ENCODE measurements at regions of chr17 and their contacts with region 1.

Region 1: DNA sequence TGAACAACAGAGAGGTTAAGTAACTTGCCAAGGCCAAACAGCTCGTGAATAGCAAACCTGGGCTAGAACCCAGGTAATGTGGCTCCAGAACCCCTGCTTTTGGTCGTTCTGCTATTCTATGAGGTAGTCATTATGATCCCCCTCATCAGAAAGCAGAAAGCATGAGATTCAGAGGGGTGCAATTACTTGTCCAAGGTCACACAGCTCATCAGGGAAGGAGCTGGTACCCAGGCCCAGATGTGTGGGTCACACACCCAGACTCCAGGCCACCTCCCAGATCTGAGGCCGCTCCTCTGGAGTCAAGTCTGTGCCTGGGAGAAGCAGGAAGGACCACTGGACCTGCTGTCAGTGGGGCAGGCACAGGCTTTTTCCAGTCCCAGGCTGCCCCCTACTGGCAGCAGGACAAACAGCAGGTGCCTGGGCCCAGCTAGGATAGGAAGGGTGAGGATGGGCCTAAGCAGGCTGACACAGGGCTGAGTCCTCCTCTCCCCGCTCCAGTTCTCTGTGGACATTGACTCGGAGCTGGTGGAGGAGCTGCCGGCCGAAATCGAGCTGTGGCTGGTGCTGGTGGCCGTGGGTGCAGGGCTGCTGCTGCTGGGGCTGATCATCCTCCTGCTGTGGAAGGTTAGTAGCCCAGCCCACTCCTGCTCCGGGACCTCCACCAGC is 7.8 kb upstream of the PDK2 start:
- DNase-seq: peak; percentile 48
- H3K4me3 ChIP-seq: no peak overlapping the region
- H3K27ac ChIP-seq: no peak overlapping the region
- H3K27me3 ChIP-seq: no peaks in the 10 kb centered on the region
- CTCF ChIP-seq: peak; percentile 95

Region 2: DNA sequence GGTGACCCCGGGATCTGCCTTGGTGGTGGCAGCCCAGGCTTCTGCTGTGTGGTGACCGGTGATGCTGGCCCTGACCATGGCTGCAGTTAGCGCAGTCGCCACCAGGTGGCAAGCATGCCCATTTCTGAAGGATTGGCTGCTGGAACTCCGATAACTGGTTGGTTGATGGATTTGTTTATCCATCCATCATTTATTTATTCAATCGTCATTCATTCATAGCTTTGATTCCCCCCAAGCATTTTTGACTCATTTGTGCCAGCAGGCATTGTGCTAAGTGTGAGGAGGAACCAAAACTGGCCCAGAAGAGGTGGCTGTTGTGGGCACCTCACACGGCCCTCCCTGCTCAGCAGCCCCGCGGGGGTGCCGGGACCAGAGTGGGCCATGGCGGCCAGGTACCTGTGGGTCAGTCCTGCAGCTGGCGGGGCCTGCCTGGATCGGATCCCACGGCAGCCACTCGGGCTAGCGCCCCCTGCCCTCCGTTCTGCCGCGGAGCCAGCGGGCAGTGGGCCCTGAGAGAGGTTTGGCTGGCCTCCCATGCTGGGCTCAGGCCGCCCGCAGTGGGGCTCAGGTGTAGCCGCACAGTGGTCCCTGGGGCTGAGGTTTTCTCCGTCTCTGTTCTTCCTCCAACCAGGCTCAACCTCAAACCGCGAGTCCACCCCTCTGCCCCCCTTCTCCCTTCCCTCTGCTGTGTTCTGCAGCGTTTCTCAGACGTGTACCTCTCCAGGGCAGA is 60.3 kb before region 1 on chr17:
- CTCF ChIA-PET with region 1: interaction called, 85 read pairs
- POLR2A ChIA-PET with region 1: no interaction called
- DNase-seq: no peak
- H3K4me3 ChIP-seq: peak overlapping the region; percentile 51
- H3K27ac ChIP-seq: peak overlapping the region; percentile 91
- H3K27me3 ChIP-seq: no peaks in the 10 kb centered on the region
- CTCF ChIP-seq: peak; percentile 90

Region 3: GRCh38 chr17:50037321-50038071 is 49.9 kb before region 1 on chr17:
- CTCF ChIA-PET with region 1: interaction called, 15 read pairs
- POLR2A ChIA-PET with region 1: no interaction called
- DNase-seq: no peak
- H3K4me3 ChIP-seq: no peak overlapping the region
- H3K27ac ChIP-seq: no peak overlapping the region
- H3K27me3 ChIP-seq: no peaks in the 10 kb centered on the region
- CTCF ChIP-seq: no peak

Region 4: GRCh38 chr17:50064258-50065001 is 22.9 kb before region 1 on chr17:
- CTCF ChIA-PET with region 1: interaction called, 15 read pairs
- POLR2A ChIA-PET with region 1: no interaction called
- DNase-seq: peak; percentile 85
- H3K4me3 ChIP-seq: no peak overlapping the region
- H3K27ac ChIP-seq: peak overlapping the region; percentile 98
- H3K27me3 ChIP-seq: no peaks in the 10 kb centered on the region
- CTCF ChIP-seq: no peak

Measured in AG04450 (cell line).